Activated CD4-positive, alpha-beta T cell treated with anti-CD3 and anti-CD28 coated beads for 36 hours (primary cell): ENCODE measurements at regions of chr4 and their contacts with region 1.

Region 1: GRCh38 chr4:76504613-76505465 is 69.8 kb downstream of the SHROOM3 start:
- DNase-seq: no peak
- ATAC-seq: peak; percentile 60
- H3K4me3 Mint-ChIP-seq: no peak overlapping the region
- H3K27ac Mint-ChIP-seq: no peak overlapping the region
- H3K4me1 Mint-ChIP-seq: no peaks in the 10 kb centered on the region
- H3K27me3 Mint-ChIP-seq: peaks cover 7% of the 10 kb centered on the region

Region 2: GRCh38 chr4:75989846-75990528 is 514.9 kb before region 1 on chr4:
- CTCF ChIA-PET with region 1: no interaction called
- POLR2A ChIA-PET with region 1: no interaction called
- intact Hi-C with region 1: no loop called
- DNase-seq: no peak
- ATAC-seq: no peak
- H3K4me3 Mint-ChIP-seq: peak overlapping the region; percentile 83
- H3K27ac Mint-ChIP-seq: peak overlapping the region; percentile 88
- H3K4me1 Mint-ChIP-seq: peaks cover 29% of the 10 kb centered on the region
- H3K27me3 Mint-ChIP-seq: no peaks in the 10 kb centered on the region

Region 3: GRCh38 chr4:76232681-76233080 is 272.2 kb before region 1 on chr4:
- CTCF ChIA-PET with region 1: no interaction called
- POLR2A ChIA-PET with region 1: no interaction called
- intact Hi-C with region 1: no loop called
- DNase-seq: no peak
- ATAC-seq: no peak
- H3K4me3 Mint-ChIP-seq: no peak overlapping the region
- H3K27ac Mint-ChIP-seq: no peak overlapping the region
- H3K4me1 Mint-ChIP-seq: no peaks in the 10 kb centered on the region
- H3K27me3 Mint-ChIP-seq: peaks cover 4% of the 10 kb centered on the region

Region 4: GRCh38 chr4:76430519-76431388 is 74.1 kb before region 1 on chr4:
- CTCF ChIA-PET with region 1: interaction called, 26 read pairs
- POLR2A ChIA-PET with region 1: no interaction called
- intact Hi-C with region 1: loop called (anchors 1 kb)
- DNase-seq: peak; percentile 6
- ATAC-seq: peak; percentile 49
- H3K4me3 Mint-ChIP-seq: no peak overlapping the region
- H3K27ac Mint-ChIP-seq: no peak overlapping the region
- H3K4me1 Mint-ChIP-seq: no peaks in the 10 kb centered on the region
- H3K27me3 Mint-ChIP-seq: peaks cover 20% of the 10 kb centered on the region